ENCODE measurements at regions of chr1 and their contacts with region 1.

Region 1: DNA sequence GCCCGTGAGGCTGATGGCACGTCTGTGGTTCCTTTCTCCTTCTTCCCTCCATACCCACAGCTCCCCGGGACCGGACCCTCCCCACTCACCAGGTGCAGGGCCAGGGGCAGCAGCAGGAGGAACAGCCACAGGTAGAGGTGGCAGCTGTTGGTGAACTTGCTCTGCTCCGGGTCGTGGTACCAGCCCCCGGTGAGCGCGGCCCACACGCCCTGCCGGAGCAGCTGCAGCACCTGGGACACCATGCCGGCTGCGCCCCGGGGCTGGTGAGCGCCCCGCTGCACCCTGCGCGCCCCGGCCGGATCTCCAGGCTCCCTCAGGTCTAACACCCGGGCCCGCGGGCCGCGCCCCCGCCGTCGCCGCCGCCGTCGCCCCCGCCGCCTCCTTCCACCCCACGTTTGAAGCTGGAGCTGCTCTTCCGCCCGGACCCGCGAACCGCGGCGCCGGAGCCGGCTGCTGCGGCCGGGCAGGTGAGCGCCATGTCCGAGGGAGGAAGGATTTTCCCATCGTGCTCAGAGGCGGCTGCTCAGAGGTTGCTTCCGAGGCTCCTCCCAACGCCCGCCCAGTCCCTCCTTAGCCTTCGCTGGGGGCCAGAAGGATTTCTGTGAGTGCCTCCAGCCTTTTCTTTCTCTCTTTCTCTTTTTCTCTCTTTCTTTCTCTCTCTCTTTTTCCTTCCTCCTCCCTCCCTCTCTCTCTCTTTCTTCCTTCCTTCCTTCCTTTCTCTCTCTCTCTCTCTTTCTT is at the start of gene PCNX2:
- DNase-seq: peak; percentile 84
- H3K4me3 Mint-ChIP-seq: peak within 1 kb of the TSS; percentile 94
- H3K27ac Mint-ChIP-seq: peak within 1 kb of the TSS; percentile 96
- H3K4me1 Mint-ChIP-seq: peaks cover 31% of the 10 kb centered on the region
- H3K27me3 Mint-ChIP-seq: no peaks in the 10 kb centered on the region
- total RNA-seq, gene PCNX2: 17.8 to 18.5 TPM

Region 2: GRCh38 chr1:233025157-233025915 is 270.1 kb before region 1 on chr1:
- CTCF ChIA-PET with region 1: no interaction called
- POLR2A ChIA-PET with region 1: no interaction called
- intact Hi-C with region 1: no loop called
- DNase-seq: no peak
- H3K4me3 Mint-ChIP-seq: no peak overlapping the region
- H3K27ac Mint-ChIP-seq: no peak overlapping the region
- H3K4me1 Mint-ChIP-seq: no peaks in the 10 kb centered on the region
- H3K27me3 Mint-ChIP-seq: no peaks in the 10 kb centered on the region

Region 3: DNA sequence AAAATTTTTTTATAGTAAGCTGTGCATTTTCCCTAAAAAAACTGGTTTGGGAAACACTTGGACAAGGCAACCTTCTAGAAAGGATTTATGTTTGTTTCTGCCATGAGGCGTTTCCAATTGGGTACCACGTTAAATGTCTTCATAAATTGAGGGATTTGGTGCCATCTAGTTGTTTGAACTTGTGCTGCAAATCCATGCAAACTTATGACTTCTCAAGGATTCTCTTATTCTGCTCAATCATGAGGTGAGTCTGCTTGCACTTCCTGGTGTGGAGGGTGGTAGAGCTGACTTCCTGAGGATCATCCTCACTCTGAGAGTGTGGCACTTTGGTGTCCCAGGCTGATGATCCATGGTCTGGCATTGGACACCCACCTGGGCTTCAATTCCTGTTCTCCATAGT is 123.2 kb before region 1 on chr1:
- CTCF ChIA-PET with region 1: no interaction called
- POLR2A ChIA-PET with region 1: no interaction called
- intact Hi-C with region 1: no loop called
- DNase-seq: no peak
- H3K4me3 Mint-ChIP-seq: no peak overlapping the region
- H3K27ac Mint-ChIP-seq: no peak overlapping the region
- H3K4me1 Mint-ChIP-seq: no peaks in the 10 kb centered on the region
- H3K27me3 Mint-ChIP-seq: no peaks in the 10 kb centered on the region

Region 4: GRCh38 chr1:233240829-233241682 is 54.4 kb before region 1 on chr1:
- CTCF ChIA-PET with region 1: no interaction called
- POLR2A ChIA-PET with region 1: no interaction called
- intact Hi-C with region 1: no loop called
- DNase-seq: peak; percentile 12
- H3K4me3 Mint-ChIP-seq: no peak overlapping the region
- H3K27ac Mint-ChIP-seq: no peak overlapping the region
- H3K4me1 Mint-ChIP-seq: no peaks in the 10 kb centered on the region
- H3K27me3 Mint-ChIP-seq: no peaks in the 10 kb centered on the region

Region 5: DNA sequence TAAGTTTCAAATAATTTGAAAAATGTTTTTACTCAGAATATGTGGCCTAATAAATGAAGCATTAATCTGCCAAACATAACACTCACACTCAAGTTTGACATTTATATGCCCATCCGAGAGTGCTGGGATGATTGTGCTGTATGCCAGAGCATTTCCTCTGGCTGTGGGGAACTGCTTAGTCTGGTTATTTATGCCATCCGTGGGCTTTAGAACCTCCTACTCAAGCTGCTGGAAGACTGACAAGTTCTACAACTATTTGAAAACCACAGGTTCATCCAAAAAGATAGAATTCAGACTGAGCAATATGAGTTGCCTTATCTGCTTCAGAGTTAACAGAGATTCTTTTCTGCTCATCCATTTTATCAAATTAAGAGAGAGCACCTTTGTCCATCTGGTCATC is 25.8 kb before region 1 on chr1:
- CTCF ChIA-PET with region 1: no interaction called
- POLR2A ChIA-PET with region 1: interaction called, 5 read pairs
- intact Hi-C with region 1: loop called (anchors 2 kb)
- DNase-seq: no peak
- H3K4me3 Mint-ChIP-seq: no peak overlapping the region
- H3K27ac Mint-ChIP-seq: no peak overlapping the region
- H3K4me1 Mint-ChIP-seq: peaks cover 42% of the 10 kb centered on the region
- H3K27me3 Mint-ChIP-seq: no peaks in the 10 kb centered on the region

Region 6: DNA sequence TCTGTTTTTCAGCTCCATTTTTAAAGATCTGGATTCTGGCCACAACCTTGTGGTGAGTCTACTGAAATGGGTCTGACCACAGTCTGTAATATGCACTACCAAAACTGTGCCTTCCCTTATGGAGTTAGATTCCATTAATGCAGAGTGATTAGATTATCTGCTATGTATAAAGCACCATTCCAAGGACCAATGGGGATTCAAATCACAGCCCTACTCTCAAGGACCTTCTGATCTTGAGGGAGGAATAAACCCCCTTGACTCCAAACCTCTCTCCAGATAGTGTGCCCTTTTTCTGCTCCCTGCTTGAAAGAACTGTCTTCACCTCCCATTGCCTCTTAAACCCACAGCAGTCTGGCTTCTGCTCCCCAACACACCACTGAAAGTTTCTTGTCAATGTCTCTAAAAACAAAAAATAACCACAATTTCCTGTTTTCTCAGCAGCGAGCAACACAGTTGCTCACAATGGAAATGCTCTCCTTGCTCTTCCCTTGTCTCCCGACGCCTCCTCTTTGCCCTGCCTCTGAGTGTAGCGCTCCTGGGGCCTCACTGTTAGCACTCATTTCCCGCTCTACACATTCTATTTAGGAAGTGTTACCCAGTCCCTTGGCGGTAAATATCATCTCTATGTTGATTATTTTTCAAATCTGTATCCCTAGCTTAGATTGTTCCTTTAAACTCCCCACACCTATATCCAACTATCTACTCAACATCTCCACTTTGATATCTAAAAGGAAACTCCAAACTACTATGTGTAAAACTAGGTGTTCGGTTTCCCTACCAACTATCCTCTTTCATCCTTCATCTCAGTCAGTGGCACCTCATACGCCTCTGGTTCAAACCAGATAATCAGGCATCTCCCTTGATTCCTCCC is 13.5 kb before region 1 on chr1:
- CTCF ChIA-PET with region 1: interaction called, 4 read pairs
- POLR2A ChIA-PET with region 1: interaction called, 4 read pairs
- intact Hi-C with region 1: loop called (anchors 1 kb)
- DNase-seq: peak; percentile 45
- H3K4me3 Mint-ChIP-seq: peak overlapping the region; percentile 46
- H3K27ac Mint-ChIP-seq: peak overlapping the region; percentile 73
- H3K4me1 Mint-ChIP-seq: peaks cover 45% of the 10 kb centered on the region
- H3K27me3 Mint-ChIP-seq: no peaks in the 10 kb centered on the region

Region 7: GRCh38 chr1:233326811-233327650 is 31.6 kb after region 1 on chr1:
- CTCF ChIA-PET with region 1: interaction called, 3 read pairs
- POLR2A ChIA-PET with region 1: interaction called, 3 read pairs
- intact Hi-C with region 1: loop called (anchors 1 kb)
- DNase-seq: peak; percentile 96
- H3K4me3 Mint-ChIP-seq: peak overlapping the region; percentile 69
- H3K27ac Mint-ChIP-seq: no peak overlapping the region
- H3K4me1 Mint-ChIP-seq: peaks cover 13% of the 10 kb centered on the region
- H3K27me3 Mint-ChIP-seq: no peaks in the 10 kb centered on the region

Region 8: GRCh38 chr1:233406994-233407631 is 111.7 kb after region 1 on chr1:
- CTCF ChIA-PET with region 1: no interaction called
- POLR2A ChIA-PET with region 1: no interaction called
- intact Hi-C with region 1: loop called (anchors 5 kb)
- DNase-seq: peak; percentile 23
- H3K4me3 Mint-ChIP-seq: no peak overlapping the region
- H3K27ac Mint-ChIP-seq: peak overlapping the region; percentile 81
- H3K4me1 Mint-ChIP-seq: peaks cover 26% of the 10 kb centered on the region
- H3K27me3 Mint-ChIP-seq: peaks cover 18% of the 10 kb centered on the region